GM13976 (cell line): ENCODE measurements at regions of chr2 and their contacts with region 1.

Region 1: GRCh38 chr2:203238704-203239526 is at the start of gene CYP20A1:
- DNase-seq: peak; percentile 94
- CTCF ChIP-seq: peak; percentile 16

Region 2: GRCh38 chr2:202790676-202791075 is 448.2 kb before region 1 on chr2:
- in situ Hi-C with region 1: no loop called
- DNase-seq: no peak
- CTCF ChIP-seq: no peak

Region 3: DNA sequence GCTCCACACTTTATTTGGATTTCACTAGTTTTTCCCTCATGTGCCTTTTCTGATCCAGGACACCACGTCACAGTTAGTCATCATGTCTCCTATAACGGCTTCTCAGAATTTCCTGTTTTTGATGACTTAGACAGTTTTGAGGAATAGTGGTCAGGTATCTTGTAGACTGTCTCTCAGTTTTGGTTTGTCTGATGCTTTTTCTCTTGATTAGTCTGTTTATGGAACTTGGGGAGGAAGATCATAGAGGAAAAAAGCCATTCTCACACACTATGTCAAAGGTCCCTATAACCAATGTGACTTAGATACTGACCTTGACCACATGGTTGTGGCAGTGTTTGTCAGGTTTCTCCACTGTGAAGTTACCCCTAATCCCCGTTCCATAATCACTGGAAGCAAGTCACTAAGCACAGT is 207.2 kb after region 1 on chr2:
- in situ Hi-C with region 1: loop called (anchors 25 kb)
- DNase-seq: no peak
- CTCF ChIP-seq: no peak

Region 4: GRCh38 chr2:203461736-203462135 is 222.8 kb after region 1 on chr2:
- in situ Hi-C with region 1: no loop called
- DNase-seq: no peak
- CTCF ChIP-seq: no peak

Region 5: DNA sequence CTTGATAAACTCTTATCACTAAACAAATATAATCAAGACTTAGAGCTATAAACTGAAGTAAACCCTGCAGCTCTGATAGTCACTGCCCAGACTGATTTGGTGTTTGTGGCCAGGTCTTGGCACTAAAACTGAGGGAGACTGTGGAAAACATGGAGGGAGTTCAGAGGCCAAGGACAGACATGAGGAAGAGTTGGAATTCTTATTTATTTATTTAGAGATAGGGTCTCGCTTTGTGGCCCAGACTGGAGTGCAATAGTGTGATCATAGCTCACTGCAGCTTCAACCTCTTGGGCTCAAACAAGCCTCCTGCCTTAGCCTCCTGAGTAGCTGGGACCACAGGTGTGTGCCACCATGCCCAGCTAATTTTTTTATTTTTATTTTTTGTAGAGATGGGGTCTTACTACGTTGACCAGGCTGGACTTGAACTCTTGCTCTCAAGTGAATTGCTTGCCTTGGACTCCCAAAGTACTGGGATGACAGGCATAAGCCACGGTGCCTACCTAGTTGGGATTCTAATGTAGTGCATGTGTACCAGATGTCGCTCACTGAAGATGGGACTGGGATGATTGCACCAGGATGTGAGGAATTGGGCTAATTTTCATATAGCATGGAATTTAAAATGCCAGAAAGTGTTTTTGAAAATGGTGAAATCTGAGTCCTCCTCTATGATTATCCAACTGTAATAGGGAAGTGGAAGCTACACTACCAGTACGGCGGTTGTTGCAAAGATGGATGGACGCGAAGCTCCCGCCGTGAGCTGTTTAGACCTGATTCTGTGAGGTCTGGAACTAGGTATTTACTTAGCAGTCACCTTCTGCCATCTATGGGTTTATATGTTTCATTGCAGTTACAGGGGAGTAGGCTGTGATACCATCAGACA is 576.0 kb after region 1 on chr2:
- in situ Hi-C with region 1: loop called (anchors 25 kb)
- DNase-seq: peak; percentile 69
- CTCF ChIP-seq: peak; percentile 67

Region 6: DNA sequence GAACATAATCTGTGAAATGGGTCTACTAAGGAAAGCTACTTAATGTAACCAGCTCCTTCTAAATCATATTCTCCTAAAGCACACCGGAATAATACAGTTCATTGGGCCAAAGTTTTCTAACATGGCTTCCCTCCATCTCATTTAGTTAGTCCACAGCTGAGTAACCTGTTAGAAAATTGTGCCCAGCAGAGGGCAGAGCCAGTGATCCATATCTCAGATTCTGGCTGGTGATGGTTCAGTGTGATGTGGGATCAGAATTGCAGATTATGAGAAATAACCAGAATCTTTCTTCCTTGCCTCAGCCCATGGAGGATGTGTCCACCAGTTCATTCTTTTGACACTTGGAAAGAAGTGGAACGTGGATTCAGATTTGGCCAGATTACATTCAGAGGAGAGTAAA is 619.3 kb after region 1 on chr2:
- in situ Hi-C with region 1: no loop called
- DNase-seq: no peak
- CTCF ChIP-seq: no peak